ENCODE measurements at regions of chr12 and their contacts with region 1.

Region 1: GRCh38 chr12:88153959-88154358 is 11.9 kb downstream of the TMTC3 start:
- DNase-seq: peak; percentile 37
- ATAC-seq: no peak
- H3K4me3 ChIP-seq: no peak overlapping the region
- H3K27ac ChIP-seq: no peak overlapping the region
- H3K4me1 ChIP-seq: no peaks in the 10 kb centered on the region
- H3K27me3 ChIP-seq: no peaks in the 10 kb centered on the region
- CTCF ChIP-seq: peak in 2 of 3 experiments; percentile 27 to 45; a peak in 2 of 6 replicates
- POLR2A ChIP-seq: no peak
- RAD21 ChIP-seq: peak; percentile 75

Region 2: GRCh38 chr12:88258396-88258795 is 104.4 kb after region 1 on chr12:
- CTCF ChIA-PET with region 1: no interaction called
- POLR2A ChIA-PET with region 1: no interaction called
- RAD21 ChIA-PET with region 1: no interaction called
- intact Hi-C with region 1: no loop called
- DNase-seq: no peak
- ATAC-seq: no peak
- H3K4me3 ChIP-seq: no peak overlapping the region
- H3K27ac ChIP-seq: no peak overlapping the region
- H3K4me1 ChIP-seq: no peaks in the 10 kb centered on the region
- H3K27me3 ChIP-seq: no peaks in the 10 kb centered on the region
- CTCF ChIP-seq: no peak
- POLR2A ChIP-seq: no peak
- RAD21 ChIP-seq: no peak

Region 3: GRCh38 chr12:88393017-88393767 is 239.2 kb after region 1 on chr12:
- CTCF ChIA-PET with region 1: no interaction called
- POLR2A ChIA-PET with region 1: no interaction called
- RAD21 ChIA-PET with region 1: no interaction called
- intact Hi-C with region 1: loop called (anchors 1 kb)
- DNase-seq: peak; percentile 27
- ATAC-seq: peak; percentile 74
- H3K4me3 ChIP-seq: no peak overlapping the region
- H3K27ac ChIP-seq: no peak overlapping the region
- H3K4me1 ChIP-seq: 0 out of 4 replicates have a peak, but pooled peaks cover 0 to 3% of the 10 kb centered on the region in 2 experiments
- H3K27me3 ChIP-seq: no peaks in the 10 kb centered on the region
- CTCF ChIP-seq: peak; percentile 15 to 58 (median 57); a peak in 5 of 6 replicates
- POLR2A ChIP-seq: no peak
- RAD21 ChIP-seq: peak; percentile 63